ENCODE measurements at regions of chr3 and their contacts with region 1.

Region 1: GRCh38 chr3:51941798-51942602 is at the starts of genes PARP3 and RRP9:
- DNase-seq: peak; percentile 100
- H3K4me3 ChIP-seq: peak within 1 kb of the TSS; percentile 60 to 66
- H3K27ac ChIP-seq: peak within 1 kb of the TSS; percentile 80 to 87
- H3K4me1 ChIP-seq: peaks cover 9% of the 10 kb centered on the region
- H3K27me3 ChIP-seq: no peaks in the 10 kb centered on the region
- CTCF ChIP-seq: peak; percentile 98 to 100 (median 100)
- POLR2A ChIP-seq: peak; percentile 53
- total RNA-seq, gene PARP3: 22.0 to 45.9 TPM
- total RNA-seq, gene RRP9: 14.9 to 18.6 TPM

Region 2: DNA sequence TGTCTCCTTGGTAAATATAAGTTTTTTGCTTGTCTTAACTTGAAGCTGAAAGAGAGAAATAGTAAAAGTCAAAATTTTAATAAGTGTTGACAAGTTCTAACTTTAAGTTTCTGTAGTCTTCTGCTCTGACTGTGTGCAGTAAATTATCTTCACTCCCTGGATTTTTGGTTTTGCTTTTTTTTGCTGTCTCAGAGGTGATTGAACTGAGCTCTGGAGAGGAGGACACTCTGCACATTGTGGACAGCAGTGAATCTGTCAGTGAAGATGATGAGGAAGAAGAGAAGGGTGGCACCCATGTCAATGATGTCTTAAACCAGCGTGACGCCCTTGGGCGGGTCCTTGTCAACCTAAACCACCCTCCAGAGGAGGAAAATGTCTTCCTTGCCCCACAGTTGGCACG is 311.5 kb before region 1 on chr3:
- intact Hi-C with region 1: no loop called
- DNase-seq: no peak
- H3K4me3 ChIP-seq: no peak overlapping the region
- H3K27ac ChIP-seq: no peak overlapping the region
- H3K4me1 ChIP-seq: no peaks in the 10 kb centered on the region
- H3K27me3 ChIP-seq: no peaks in the 10 kb centered on the region
- CTCF ChIP-seq: no peak
- POLR2A ChIP-seq: no peak

Region 3: GRCh38 chr3:51974963-51975851 is 33.2 kb after region 1 on chr3 and contains the start of gene ABHD14A:
- intact Hi-C with region 1: loop called (anchors 2 kb)
- DNase-seq: peak; percentile 59
- H3K4me3 ChIP-seq: peak within 1 kb of the TSS; percentile 54 to 67
- H3K27ac ChIP-seq: peak within 1 kb of the TSS; percentile 90 to 91
- H3K4me1 ChIP-seq: peaks cover 14% of the 10 kb centered on the region
- H3K27me3 ChIP-seq: no peaks in the 10 kb centered on the region
- CTCF ChIP-seq: peak in 2 of 4 experiments; percentile 6 to 26
- POLR2A ChIP-seq: peak; percentile 74
- total RNA-seq, gene ABHD14A: 55.3 to 58.5 TPM

Region 4: GRCh38 chr3:51995346-51996163 is 53.6 kb after region 1 on chr3 and contains the start of gene RPL29:
- intact Hi-C with region 1: no loop called
- DNase-seq: peak; percentile 89
- H3K4me3 ChIP-seq: peak within 1 kb of the TSS; percentile 55 to 80
- H3K27ac ChIP-seq: peak within 1 kb of the TSS; percentile 80 to 88
- H3K4me1 ChIP-seq: peaks cover 7% of the 10 kb centered on the region
- H3K27me3 ChIP-seq: no peaks in the 10 kb centered on the region
- CTCF ChIP-seq: peak in 3 of 4 experiments; percentile 45 to 64 (median 45)
- POLR2A ChIP-seq: peak; percentile 56
- total RNA-seq, gene RPL29: 1,249 to 2,015 TPM

Region 5: GRCh38 chr3:52028572-52028971 is 86.6 kb after region 1 on chr3:
- intact Hi-C with region 1: no loop called
- DNase-seq: no peak
- H3K4me3 ChIP-seq: no peak overlapping the region
- H3K27ac ChIP-seq: no peak overlapping the region
- H3K4me1 ChIP-seq: no peaks in the 10 kb centered on the region
- H3K27me3 ChIP-seq: no peaks in the 10 kb centered on the region
- CTCF ChIP-seq: no peak
- POLR2A ChIP-seq: no peak

Measured in prostate gland (tissue), 2 donors.